ENCODE measurements at regions of chr22 and their contacts with region 1.

Region 1: GRCh38 chr22:33302049-33302545 is 243.9 kb upstream of the SYN3 start:
- DNase-seq: peak; percentile 64 to 97
- H3K4me3 ChIP-seq: no peak overlapping the region
- H3K27ac ChIP-seq: no peak overlapping the region
- H3K4me1 ChIP-seq: no peaks in the 10 kb centered on the region
- H3K27me3 ChIP-seq: no peaks in the 10 kb centered on the region
- CTCF ChIP-seq: peak; percentile 91 to 96 (median 93)
- EP300 ChIP-seq: no peak
- POLR2A ChIP-seq: no peak
- RAD21 ChIP-seq: peak; percentile 98 to 99

Region 2: GRCh38 chr22:33260498-33260897 is 41.6 kb before region 1 on chr22:
- CTCF ChIA-PET with region 1: no interaction called
- POLR2A ChIA-PET with region 1: no interaction called
- DNase-seq: no peak
- H3K4me3 ChIP-seq: no peak overlapping the region
- H3K27ac ChIP-seq: no peak overlapping the region
- H3K4me1 ChIP-seq: no peaks in the 10 kb centered on the region; a peak in 1 of 7 replicates
- H3K27me3 ChIP-seq: no peaks in the 10 kb centered on the region
- CTCF ChIP-seq: no peak
- EP300 ChIP-seq: no peak
- POLR2A ChIP-seq: no peak
- RAD21 ChIP-seq: no peak

Region 3: DNA sequence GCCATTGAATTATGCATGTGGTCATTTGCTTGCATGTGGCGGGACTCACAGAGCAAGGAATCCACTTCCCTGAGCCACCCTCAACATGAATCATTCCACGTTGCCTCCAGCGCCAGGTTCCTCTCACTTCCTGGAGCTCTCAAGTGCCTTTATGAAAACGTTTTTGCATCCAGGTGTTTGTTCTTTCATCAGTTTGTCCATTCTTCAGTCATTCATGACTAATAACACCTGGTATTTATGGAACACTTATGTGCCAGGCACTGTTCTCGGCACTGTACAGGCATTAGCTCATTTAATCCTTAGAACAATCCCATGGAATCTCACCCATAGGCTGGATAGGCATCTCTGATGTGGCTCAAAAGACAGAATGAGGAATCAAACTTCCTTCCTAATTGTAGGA is 12.2 kb after region 1 on chr22:
- CTCF ChIA-PET with region 1: interaction called, 11 read pairs
- POLR2A ChIA-PET with region 1: interaction called, 3 read pairs
- DNase-seq: no peak
- H3K4me3 ChIP-seq: no peak overlapping the region
- H3K27ac ChIP-seq: no peak overlapping the region
- H3K4me1 ChIP-seq: no peaks in the 10 kb centered on the region
- H3K27me3 ChIP-seq: no peaks in the 10 kb centered on the region
- CTCF ChIP-seq: no peak
- EP300 ChIP-seq: no peak
- POLR2A ChIP-seq: no peak
- RAD21 ChIP-seq: no peak